Activated naive CD4-positive, alpha-beta T cell treated with anti-CD3 and anti-CD28 coated beads for 36 hours (primary cell): ENCODE measurements at regions of chr15 and their contacts with region 1.

Region 1: DNA sequence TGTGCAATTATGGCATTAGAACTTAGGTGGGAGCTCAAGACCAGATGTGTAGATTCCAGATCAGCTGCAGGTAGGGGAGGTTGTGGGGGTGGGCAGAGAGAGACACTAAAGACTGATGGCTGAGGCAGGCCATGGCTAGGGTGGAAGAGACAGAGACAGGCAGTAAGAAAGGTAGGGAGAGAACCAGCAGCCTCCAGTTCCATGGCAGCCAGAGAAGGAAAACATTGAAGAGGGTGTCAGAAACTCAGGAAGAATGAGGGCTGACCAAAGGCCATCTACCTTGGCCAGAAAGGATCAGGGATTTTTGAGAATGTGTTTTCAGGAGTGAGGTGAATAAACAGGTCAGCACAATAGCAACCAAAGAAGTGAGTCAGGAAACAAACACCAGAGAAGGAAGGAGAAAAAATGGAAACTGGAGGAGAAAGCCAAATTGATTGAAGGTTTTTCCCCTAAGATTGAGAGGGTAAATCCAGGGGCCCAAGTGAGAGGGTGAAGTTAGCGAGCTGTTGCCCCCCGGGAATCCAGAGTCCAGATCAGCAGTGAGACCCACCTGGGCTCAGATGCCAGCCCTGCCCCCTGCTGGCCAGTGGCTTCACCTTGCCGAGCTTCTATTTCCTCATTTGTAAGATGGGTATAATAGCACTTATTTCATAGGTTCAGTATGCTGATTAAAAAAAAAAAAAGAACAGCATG is 41.0 kb downstream of the ABHD2 start:
- DNase-seq: peak; percentile 71
- H3K4me3 Mint-ChIP-seq: no peak overlapping the region
- H3K27ac Mint-ChIP-seq: no peak overlapping the region
- H3K4me1 Mint-ChIP-seq: peaks cover 22% of the 10 kb centered on the region
- H3K27me3 Mint-ChIP-seq: no peaks in the 10 kb centered on the region

Region 2: DNA sequence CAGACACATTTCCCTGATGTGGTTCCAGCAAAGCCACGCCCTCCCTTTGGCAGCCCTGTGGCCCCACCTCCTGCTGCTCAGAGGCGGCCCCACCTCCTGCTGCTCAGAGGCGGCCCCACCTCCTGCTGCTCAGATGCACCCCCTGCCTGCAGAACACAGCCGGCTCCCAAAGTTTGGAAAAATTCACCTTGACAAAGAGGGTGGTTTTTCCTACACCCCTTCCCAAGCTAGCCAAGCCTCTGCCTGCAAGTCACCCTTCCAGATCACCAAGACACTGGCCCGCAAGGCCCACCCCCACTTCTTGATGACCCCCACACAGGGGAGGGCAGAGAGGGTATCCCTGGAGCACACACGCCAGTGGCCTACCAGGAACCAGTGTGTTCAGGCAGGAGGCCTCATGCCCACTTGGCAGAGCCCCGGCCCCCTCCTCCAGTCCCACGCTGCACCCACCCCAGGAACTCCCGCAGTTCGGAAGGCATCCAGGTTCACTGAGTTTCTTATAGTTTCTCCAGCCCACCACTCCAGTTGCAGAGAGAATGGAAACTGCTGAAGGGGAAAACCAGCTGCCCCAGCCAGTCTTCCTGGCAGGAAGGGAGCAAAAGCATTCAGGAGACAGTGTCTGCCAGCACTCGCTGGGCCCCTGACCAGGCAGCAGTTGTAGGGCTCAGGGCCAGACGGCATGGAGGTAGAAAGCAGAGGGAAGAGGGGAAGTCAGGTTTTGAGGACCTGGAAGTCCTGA is 231.6 kb before region 1 on chr15:
- CTCF ChIA-PET with region 1: no interaction called
- intact Hi-C with region 1: loop called (anchors 1 kb)
- DNase-seq: peak; percentile 84
- H3K4me3 Mint-ChIP-seq: no peak overlapping the region
- H3K27ac Mint-ChIP-seq: no peak overlapping the region
- H3K4me1 Mint-ChIP-seq: peaks cover 43% of the 10 kb centered on the region
- H3K27me3 Mint-ChIP-seq: no peaks in the 10 kb centered on the region

Region 3: DNA sequence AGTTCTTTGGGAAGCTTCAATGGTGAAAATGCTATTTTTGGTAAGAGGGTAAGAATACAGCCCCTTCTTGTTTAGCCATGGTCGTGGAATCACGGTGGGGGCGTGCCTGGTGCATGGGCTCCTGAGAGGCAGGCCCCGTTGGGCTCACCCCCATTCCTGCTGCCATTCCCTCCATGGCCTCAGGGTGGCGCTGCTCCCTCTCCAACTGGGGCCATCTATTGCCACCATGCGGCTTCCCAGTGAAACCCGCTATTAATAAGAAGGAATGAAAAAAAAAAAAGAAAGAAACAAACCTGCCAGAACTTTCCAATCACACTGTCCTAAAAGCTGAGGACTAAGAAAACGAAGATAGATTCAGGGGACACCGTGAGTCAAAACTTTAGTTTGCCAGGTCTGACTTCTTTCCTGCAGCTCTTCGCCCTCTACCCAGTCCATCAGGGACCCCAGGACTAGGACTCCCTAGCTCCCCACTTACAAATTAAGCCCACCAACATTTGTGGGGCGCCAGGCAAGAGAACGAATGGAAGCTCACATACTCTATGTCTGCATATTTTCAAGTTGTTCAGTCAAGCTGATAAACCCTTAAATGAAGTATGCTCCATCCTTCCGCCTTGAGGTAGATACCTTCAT is 71.7 kb before region 1 on chr15:
- CTCF ChIA-PET with region 1: interaction called, 118 read pairs
- intact Hi-C with region 1: loop called (anchors 1 kb)
- DNase-seq: peak; percentile 91
- H3K4me3 Mint-ChIP-seq: no peak overlapping the region
- H3K27ac Mint-ChIP-seq: no peak overlapping the region
- H3K4me1 Mint-ChIP-seq: peaks cover 11% of the 10 kb centered on the region
- H3K27me3 Mint-ChIP-seq: no peaks in the 10 kb centered on the region

Region 4: DNA sequence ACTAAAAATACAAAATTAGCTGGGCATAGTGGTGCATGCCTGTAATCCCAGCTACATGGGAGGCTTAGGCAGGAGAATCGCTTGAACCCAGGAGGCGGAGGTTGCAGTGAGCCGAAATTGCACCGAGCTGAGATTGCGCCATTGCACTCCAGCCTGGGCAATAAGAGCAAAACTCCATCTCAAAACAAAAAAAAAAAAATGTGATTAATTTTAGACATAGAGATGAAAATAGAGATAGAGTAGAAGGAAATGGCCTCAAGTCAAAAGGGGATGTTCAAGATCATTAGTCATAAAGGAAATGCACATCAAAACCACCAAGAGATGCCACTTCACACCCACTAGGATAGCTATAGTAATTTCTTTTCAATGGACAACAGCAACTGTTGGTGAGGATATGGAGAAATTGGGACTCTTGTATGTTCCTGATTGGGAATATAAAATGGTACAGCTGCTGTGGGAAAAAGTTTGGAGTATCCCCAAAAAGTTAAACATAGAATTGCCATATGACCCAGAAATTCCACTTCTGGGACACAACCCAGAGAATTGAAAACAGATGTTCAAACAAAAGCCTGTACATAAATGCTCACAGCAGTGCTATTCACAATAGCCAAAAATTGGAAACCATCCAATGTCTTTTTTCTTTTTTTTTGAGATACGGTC is 14.4 kb after region 1 on chr15:
- CTCF ChIA-PET with region 1: interaction called, 10 read pairs
- intact Hi-C with region 1: loop called (anchors 2 kb)
- DNase-seq: no peak
- H3K4me3 Mint-ChIP-seq: no peak overlapping the region
- H3K27ac Mint-ChIP-seq: no peak overlapping the region
- H3K4me1 Mint-ChIP-seq: peaks cover 27% of the 10 kb centered on the region
- H3K27me3 Mint-ChIP-seq: no peaks in the 10 kb centered on the region

Region 5: GRCh38 chr15:89177633-89178306 is 48.5 kb after region 1 on chr15:
- CTCF ChIA-PET with region 1: interaction called, 14 read pairs
- intact Hi-C with region 1: loop called (anchors 2 kb)
- DNase-seq: peak; percentile 86
- H3K4me3 Mint-ChIP-seq: no peak overlapping the region
- H3K27ac Mint-ChIP-seq: peak overlapping the region; percentile 94
- H3K4me1 Mint-ChIP-seq: peaks cover 46% of the 10 kb centered on the region
- H3K27me3 Mint-ChIP-seq: no peaks in the 10 kb centered on the region